Transverse colon (tissue), 4 donors: ENCODE measurements at regions of chr2 and their contacts with region 1.

Region 1: GRCh38 chr2:166539340-166540162 is 45.5 kb upstream of the SCN7A start:
- DNase-seq: no peak
- H3K4me3 ChIP-seq: no peak overlapping the region
- H3K27ac ChIP-seq: no peak overlapping the region
- H3K4me1 ChIP-seq: peaks cover 0 to 5% (median 0%) of the 10 kb centered on the region in 4 donors
- H3K27me3 ChIP-seq: no peaks in the 10 kb centered on the region
- CTCF ChIP-seq: peak; percentile 56 to 73 (median 70)
- EP300 ChIP-seq: no peak
- POLR2A ChIP-seq: no peak

Region 2: GRCh38 chr2:167212014-167212648 is 672.6 kb after region 1 on chr2:
- in situ Hi-C with region 1: loop called in 2 of 4 experiments (anchors 25 kb)
- intact Hi-C with region 1: loop called (anchors 5 kb)
- DNase-seq: no peak
- H3K4me3 ChIP-seq: no peak overlapping the region
- H3K27ac ChIP-seq: no peak overlapping the region
- H3K4me1 ChIP-seq: no peaks in the 10 kb centered on the region
- H3K27me3 ChIP-seq: no peaks in the 10 kb centered on the region
- CTCF ChIP-seq: peak; percentile 68 to 76 (median 70)
- EP300 ChIP-seq: no peak
- POLR2A ChIP-seq: no peak

Region 3: GRCh38 chr2:167869200-167869599 is 1329.6 kb after region 1 on chr2:
- in situ Hi-C with region 1: no loop called
- intact Hi-C with region 1: no loop called
- DNase-seq: no peak
- H3K4me3 ChIP-seq: no peak overlapping the region
- H3K27ac ChIP-seq: no peak overlapping the region
- H3K4me1 ChIP-seq: no peaks in the 10 kb centered on the region
- H3K27me3 ChIP-seq: no peaks in the 10 kb centered on the region
- CTCF ChIP-seq: no peak
- EP300 ChIP-seq: no peak
- POLR2A ChIP-seq: no peak